Activated CD4-positive, alpha-beta T cell treated with anti-CD3 and anti-CD28 coated beads for 36 hours (primary cell): ENCODE measurements at regions of chrX and their contacts with region 1.

Region 1: DNA sequence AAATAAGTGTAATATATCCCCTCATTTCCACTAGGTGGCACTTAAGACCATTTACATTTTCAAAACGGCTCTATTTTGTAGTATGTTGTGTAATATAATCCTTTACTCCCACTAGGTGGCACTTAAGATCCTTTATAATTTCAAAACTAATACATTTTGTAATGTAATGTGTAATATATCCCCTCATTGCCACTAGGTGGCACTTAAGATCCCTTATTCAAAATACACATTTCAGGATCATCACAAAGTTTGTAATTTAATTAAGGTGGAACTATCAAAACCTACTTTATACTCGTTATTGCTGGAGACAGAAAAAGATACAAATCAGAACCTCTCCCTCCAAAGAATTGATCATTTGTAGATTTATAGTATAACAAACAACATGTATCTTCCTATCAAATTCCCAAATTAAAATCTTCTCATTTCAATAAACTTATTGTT is 132.5 kb downstream of the ARHGAP6 start:
- DNase-seq: no peak
- ATAC-seq: peak; percentile 95
- H3K4me3 Mint-ChIP-seq: no peak overlapping the region
- H3K27ac Mint-ChIP-seq: no peak overlapping the region
- H3K4me1 Mint-ChIP-seq: no peaks in the 10 kb centered on the region
- H3K27me3 Mint-ChIP-seq: no peaks in the 10 kb centered on the region

Region 2: GRCh38 chrX:11381464-11381863 is 151.8 kb before region 1 on chrX:
- CTCF ChIA-PET with region 1: interaction called, 3 read pairs
- POLR2A ChIA-PET with region 1: no interaction called
- intact Hi-C with region 1: loop called in 1 of 2 experiments (anchors 2 kb)
- DNase-seq: peak; percentile 8
- ATAC-seq: no peak
- H3K4me3 Mint-ChIP-seq: no peak overlapping the region
- H3K27ac Mint-ChIP-seq: no peak overlapping the region
- H3K4me1 Mint-ChIP-seq: no peaks in the 10 kb centered on the region
- H3K27me3 Mint-ChIP-seq: peaks cover 4% of the 10 kb centered on the region

Region 3: DNA sequence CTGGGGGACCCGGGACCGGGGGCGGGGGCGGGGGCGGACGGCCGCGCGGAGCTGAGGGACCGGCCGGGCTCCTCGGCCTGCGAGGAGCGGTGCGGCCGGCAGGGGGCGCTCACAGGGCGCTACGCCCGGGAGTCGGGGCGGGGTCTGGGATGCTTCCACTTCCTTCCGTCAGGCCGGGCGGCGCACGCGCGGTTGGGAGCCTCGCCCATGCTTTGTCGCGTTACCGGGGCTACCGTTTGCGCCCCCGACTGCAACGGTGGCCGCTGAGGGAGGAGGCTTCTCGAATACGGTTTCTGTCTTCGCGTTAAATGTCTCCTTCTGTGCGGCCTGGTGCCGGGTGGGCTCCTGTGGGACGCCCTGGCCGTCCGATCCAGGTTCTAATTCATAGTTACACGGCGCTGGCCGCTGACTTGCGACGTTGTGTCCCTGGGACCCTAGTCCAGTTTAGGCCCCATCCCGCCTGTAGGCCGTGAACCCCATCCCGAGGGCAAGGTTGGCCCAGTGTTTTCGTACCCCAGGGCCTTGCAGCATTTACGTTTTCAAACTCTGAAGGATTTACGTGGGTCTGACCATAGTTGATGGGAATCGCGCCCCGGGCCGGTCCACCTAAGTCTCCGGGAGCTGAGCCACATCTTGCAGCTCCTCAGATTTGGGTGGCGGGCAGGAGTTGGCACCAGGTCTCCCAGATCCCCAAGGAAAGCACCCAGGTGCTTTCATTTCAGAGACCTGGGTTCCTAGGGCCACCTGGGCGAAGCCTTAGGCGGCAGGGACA is 225.4 kb after region 1 on chrX:
- CTCF ChIA-PET with region 1: interaction called, 4 read pairs
- POLR2A ChIA-PET with region 1: no interaction called
- intact Hi-C with region 1: loop called in 1 of 2 experiments (anchors 1 kb)
- DNase-seq: peak; percentile 93
- ATAC-seq: peak; percentile 57
- H3K4me3 Mint-ChIP-seq: peak overlapping the region; percentile 94
- H3K27ac Mint-ChIP-seq: peak overlapping the region; percentile 96
- H3K4me1 Mint-ChIP-seq: peaks cover 14% of the 10 kb centered on the region
- H3K27me3 Mint-ChIP-seq: no peaks in the 10 kb centered on the region

Region 4: GRCh38 chrX:11908371-11908770 is 375.1 kb after region 1 on chrX:
- CTCF ChIA-PET with region 1: no interaction called
- POLR2A ChIA-PET with region 1: no interaction called
- intact Hi-C with region 1: loop called (anchors 2 kb)
- DNase-seq: peak; percentile 32
- ATAC-seq: peak; percentile 84
- H3K4me3 Mint-ChIP-seq: no peak overlapping the region
- H3K27ac Mint-ChIP-seq: no peak overlapping the region
- H3K4me1 Mint-ChIP-seq: peaks cover 8% of the 10 kb centered on the region
- H3K27me3 Mint-ChIP-seq: no peaks in the 10 kb centered on the region

Region 5: DNA sequence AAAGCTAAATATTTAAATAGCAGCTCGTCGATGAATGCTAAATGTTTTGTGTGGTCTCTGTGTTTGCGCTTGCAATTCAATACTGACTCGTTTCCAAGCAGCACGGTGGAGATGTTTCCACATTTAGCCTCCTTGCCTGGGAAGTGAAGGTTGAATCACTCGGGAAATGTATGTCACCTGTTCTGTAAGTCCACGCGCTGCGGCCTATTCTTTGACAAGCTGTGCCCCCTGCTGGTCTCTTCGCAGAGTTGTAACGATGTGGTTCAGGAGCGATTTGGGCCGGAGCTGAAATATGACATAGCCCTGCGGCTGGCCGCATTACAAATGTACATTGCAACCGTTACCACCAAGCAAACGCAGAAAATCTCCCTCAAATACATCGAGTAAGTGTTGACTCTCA is 1168.4 kb after region 1 on chrX:
- CTCF ChIA-PET with region 1: no interaction called
- POLR2A ChIA-PET with region 1: no interaction called
- intact Hi-C with region 1: loop called (anchors 2 to 5 kb)
- DNase-seq: peak; percentile 66
- ATAC-seq: peak; percentile 63
- H3K4me3 Mint-ChIP-seq: no peak overlapping the region
- H3K27ac Mint-ChIP-seq: no peak overlapping the region
- H3K4me1 Mint-ChIP-seq: no peaks in the 10 kb centered on the region
- H3K27me3 Mint-ChIP-seq: peaks cover 7% of the 10 kb centered on the region